Endothelial cell of umbilical vein (primary cell): ENCODE measurements at regions of chr3 and their contacts with region 1.

Region 1: GRCh38 chr3:46538803-46539442 is 27.2 kb downstream of the LRRC2 start:
- DNase-seq: peak; percentile 11
- H3K4me3 ChIP-seq: no peak overlapping the region
- H3K27ac ChIP-seq: peak overlapping the region; percentile 35
- H3K4me1 ChIP-seq: peaks cover 18% of the 10 kb centered on the region
- H3K27me3 ChIP-seq: peaks cover 0 to 4% of the 10 kb centered on the region in 2 experiments
- CTCF ChIP-seq: no peak
- POLR2A ChIP-seq: no peak

Region 2: GRCh38 chr3:46517016-46517793 is 21.7 kb before region 1 on chr3:
- CTCF ChIA-PET with region 1: interaction called, 4 read pairs
- POLR2A ChIA-PET with region 1: no interaction called
- dilution Hi-C with region 1: no loop called
- intact Hi-C with region 1: loop called (anchors 2 kb)
- DNase-seq: peak; percentile 61
- H3K4me3 ChIP-seq: no peak overlapping the region
- H3K27ac ChIP-seq: peak overlapping the region; percentile 84
- H3K4me1 ChIP-seq: peaks cover 37% of the 10 kb centered on the region
- H3K27me3 ChIP-seq: no peaks in the 10 kb centered on the region
- CTCF ChIP-seq: no peak
- POLR2A ChIP-seq: no peak

Region 3: DNA sequence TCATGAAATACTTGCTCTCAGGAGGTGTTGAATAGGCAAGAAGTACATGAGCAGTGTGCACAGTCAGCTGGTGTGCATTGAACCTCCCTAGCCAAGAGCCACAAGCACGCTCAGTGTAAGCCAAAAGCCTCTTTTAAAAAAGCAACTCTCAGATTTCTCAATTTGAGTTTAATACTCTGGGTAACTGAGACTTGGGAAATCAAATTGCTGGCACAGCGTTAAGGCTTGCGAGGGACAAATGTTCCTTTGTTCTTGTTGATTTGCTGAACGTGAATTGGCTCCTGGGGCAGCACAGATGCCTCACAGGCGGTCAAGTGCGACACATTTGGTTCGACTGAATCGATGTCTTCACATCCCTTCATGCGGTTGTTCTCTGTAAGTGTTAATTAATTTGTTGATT is 73.4 kb after region 1 on chr3 and contains the start of gene FAM240A:
- CTCF ChIA-PET with region 1: no interaction called
- POLR2A ChIA-PET with region 1: no interaction called
- dilution Hi-C with region 1: no loop called
- intact Hi-C with region 1: no loop called
- DNase-seq: no peak
- H3K4me3 ChIP-seq: no peak within 1 kb of the TSS
- H3K27ac ChIP-seq: no peak within 1 kb of the TSS
- H3K4me1 ChIP-seq: no peaks in the 10 kb centered on the region
- H3K27me3 ChIP-seq: peaks cover 2 to 5% of the 10 kb centered on the region in 2 experiments
- CTCF ChIP-seq: no peak
- POLR2A ChIP-seq: no peak
- total RNA-seq, gene FAM240A: not detected in 2 replicates